H1 (cell line): ENCODE measurements at regions of chr11 and their contacts with region 1.

Region 1: GRCh38 chr11:76598426-76598839 is 72.1 kb downstream of the LRRC32 start:
- DNase-seq: peak in 1 of 2 experiments; percentile 62
- H3K4me3 ChIP-seq: no peak overlapping the region
- H3K27ac ChIP-seq: no peak overlapping the region
- H3K4me1 ChIP-seq: no peaks in the 10 kb centered on the region
- H3K27me3 ChIP-seq: no peaks in the 10 kb centered on the region
- CTCF ChIP-seq: peak; percentile 71 to 82 (median 79)
- EP300 ChIP-seq: no peak
- POLR2A ChIP-seq: no peak
- RAD21 ChIP-seq: peak; percentile 83 to 90

Region 2: DNA sequence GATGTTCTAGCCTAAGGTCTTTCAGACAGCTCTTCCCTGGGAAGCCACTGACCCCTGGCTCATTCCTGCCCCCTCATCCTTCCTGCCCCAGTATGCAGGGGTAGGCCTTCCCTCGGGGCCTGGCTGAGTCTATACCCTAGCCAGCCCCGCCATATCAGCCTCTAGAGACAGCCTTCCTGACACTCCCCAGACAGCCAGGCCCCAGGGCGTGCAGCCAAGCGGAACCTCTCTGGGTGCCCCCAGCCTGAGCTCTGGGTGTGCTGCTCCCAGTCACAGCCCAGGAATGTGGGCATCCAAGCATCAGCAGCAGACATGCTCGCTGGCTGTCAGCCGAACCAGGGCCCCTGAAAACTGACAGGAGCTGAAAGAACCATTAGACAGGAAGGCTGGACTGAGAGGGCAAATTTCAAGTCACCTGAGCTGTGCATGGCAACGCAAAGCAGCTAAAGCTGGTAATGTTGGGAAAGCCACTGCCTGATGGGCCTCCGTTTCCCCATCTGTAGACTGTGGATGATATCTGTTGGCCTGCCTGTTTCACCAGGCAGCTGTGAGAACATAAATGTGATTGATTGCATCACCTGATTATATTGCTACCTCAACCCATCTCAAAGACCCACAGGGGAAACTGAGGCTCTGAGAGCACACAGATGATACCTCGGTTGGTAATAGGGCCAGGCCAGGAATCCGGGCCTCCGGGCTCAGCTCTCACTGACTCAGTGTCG is 21.1 kb before region 1 on chr11:
- CTCF ChIA-PET with region 1: interaction called, 19 read pairs
- POLR2A ChIA-PET with region 1: no interaction called
- DNase-seq: no peak
- H3K4me3 ChIP-seq: no peak overlapping the region
- H3K27ac ChIP-seq: no peak overlapping the region
- H3K4me1 ChIP-seq: peaks cover 0 to 11% (median 2%) of the 10 kb centered on the region in 4 experiments; a peak in 5 of 7 replicates
- H3K27me3 ChIP-seq: no peaks in the 10 kb centered on the region
- CTCF ChIP-seq: no peak
- EP300 ChIP-seq: no peak
- POLR2A ChIP-seq: no peak
- RAD21 ChIP-seq: no peak

Region 3: DNA sequence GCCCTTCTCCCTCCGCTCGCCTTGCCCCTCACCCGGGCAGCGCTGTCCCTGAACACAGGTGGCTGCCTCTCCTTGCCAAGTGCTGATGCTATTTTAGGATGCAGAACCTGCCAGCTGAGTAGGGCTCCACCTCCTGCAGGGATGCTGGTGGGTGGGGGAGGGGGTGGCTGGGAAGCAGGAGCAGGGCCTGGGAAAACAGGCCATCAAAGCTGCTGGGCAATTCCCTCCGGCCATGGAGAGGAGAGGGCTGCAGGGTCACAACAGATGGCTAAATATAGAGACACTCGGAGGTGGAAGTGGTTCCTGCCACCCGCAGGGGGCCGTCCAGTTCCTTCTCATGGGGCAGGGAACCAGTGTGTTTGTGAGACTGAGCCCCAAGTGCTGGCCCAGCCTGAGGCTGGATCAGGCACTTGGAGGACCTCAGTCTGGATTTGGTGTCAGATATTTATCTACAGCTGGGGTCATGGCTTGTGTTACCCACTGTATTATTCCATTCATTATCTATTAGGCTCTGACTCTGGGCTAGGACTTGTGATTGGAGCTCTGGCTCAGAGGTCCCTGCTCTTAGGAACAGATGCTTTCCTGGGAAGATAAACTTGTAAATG is 12.5 kb after region 1 on chr11:
- CTCF ChIA-PET with region 1: interaction called, 36 read pairs
- POLR2A ChIA-PET with region 1: no interaction called
- DNase-seq: peak in 1 of 2 experiments; percentile 43
- H3K4me3 ChIP-seq: peak overlapping the region in 2 of 4 experiments; percentile 6 to 14; a peak in 1 of 8 replicates
- H3K27ac ChIP-seq: no peak overlapping the region
- H3K4me1 ChIP-seq: peaks cover 0 to 18% (median 10%) of the 10 kb centered on the region in 4 experiments; a peak in 6 of 7 replicates
- H3K27me3 ChIP-seq: no peaks in the 10 kb centered on the region
- CTCF ChIP-seq: no peak
- EP300 ChIP-seq: no peak
- POLR2A ChIP-seq: no peak
- RAD21 ChIP-seq: no peak

Region 4: DNA sequence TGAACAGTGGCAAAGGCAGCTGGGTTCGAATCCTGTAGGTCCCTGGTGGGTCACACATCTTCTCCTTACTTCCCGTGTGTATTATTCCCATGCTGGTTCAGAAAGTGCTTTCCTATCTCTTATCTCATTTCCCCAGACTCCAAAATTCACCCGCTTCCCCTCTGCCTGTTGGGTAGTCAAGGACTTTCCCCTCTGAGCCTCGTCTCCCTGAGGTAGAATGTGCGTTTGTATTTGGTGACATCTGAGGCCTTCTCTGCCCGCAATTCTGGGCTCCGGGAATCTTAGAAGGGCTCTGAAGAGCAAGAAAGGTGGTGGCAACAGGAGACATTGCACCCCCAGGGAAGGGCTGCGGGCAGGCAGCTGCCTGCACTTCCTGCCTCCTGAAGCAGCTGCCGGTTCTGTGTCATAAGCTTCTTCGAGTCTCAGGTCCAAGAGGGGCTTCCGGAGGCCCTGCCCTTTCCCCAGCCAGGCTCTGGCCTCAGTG is 66.2 kb after region 1 on chr11:
- CTCF ChIA-PET with region 1: interaction called, 18 read pairs
- POLR2A ChIA-PET with region 1: no interaction called
- DNase-seq: no peak
- H3K4me3 ChIP-seq: no peak overlapping the region
- H3K27ac ChIP-seq: no peak overlapping the region
- H3K4me1 ChIP-seq: peaks cover 0 to 9% (median 1%) of the 10 kb centered on the region in 4 experiments; a peak in 4 of 7 replicates
- H3K27me3 ChIP-seq: peaks cover 0 to 7% (median 4%) of the 10 kb centered on the region in 4 experiments; a peak in 4 of 7 replicates
- CTCF ChIP-seq: no peak
- EP300 ChIP-seq: no peak
- POLR2A ChIP-seq: no peak
- RAD21 ChIP-seq: no peak

Region 5: GRCh38 chr11:76670485-76671236 is 72.2 kb after region 1 on chr11 and contains the start of gene LRRC32:
- CTCF ChIA-PET with region 1: interaction called, 60 read pairs
- POLR2A ChIA-PET with region 1: no interaction called
- DNase-seq: peak in 1 of 2 experiments; percentile 77
- H3K4me3 ChIP-seq: peak within 1 kb of the TSS; percentile 47 to 68 (median 53)
- H3K27ac ChIP-seq: no peak within 1 kb of the TSS
- H3K4me1 ChIP-seq: peaks cover 0 to 6% (median 1%) of the 10 kb centered on the region in 4 experiments; a peak in 5 of 7 replicates
- H3K27me3 ChIP-seq: peaks cover 0 to 26% (median 17%) of the 10 kb centered on the region in 4 experiments; a peak in 5 of 7 replicates
- CTCF ChIP-seq: no peak
- EP300 ChIP-seq: no peak
- POLR2A ChIP-seq: no peak
- RAD21 ChIP-seq: no peak
- total RNA-seq, gene LRRC32: 0.44 and 0.99 TPM in 2 replicates

Region 6: DNA sequence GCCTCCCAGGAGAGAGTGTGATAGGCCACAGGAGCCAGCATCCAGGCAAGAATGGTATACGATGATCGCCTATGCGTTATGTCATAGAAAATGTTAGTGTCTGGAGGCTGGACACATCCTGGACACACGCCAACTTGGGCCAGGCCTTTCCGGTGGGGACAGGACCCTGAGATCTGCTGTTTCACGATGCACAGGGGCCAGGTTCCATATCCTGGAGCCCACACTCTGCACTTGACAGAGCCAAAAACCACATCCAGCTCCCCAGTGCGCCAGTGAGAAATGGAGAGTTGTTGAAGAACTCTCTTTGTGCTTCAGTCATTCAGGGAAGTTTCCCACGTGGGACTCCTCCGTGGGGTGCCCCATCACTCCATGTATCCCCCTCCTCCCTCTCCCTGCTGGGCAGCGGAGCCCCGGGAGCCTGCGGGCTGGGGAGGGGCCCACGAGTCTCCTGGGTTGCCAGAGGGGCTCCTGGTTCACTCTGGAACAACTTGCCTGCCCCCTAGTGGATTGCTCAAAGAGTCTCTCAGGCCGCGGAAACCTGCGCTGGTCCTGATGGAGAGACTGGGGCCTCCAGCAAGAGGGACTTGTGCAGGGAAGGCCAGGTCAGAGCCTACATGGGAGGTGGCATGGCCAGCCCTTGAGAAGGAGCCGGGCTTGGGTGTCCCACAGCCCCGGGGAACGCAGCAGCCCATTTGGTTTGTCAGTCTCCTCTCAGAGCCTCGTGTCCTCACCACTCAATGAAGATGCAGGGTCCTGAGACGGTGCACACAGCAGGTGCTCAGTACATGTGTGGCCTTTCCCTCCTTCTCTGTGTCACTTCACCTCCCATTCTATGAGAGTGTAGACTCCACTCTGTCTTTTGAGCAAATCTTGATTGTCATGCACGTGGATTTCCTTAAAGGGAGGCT is 82.3 kb after region 1 on chr11:
- CTCF ChIA-PET with region 1: interaction called, 60 read pairs
- POLR2A ChIA-PET with region 1: no interaction called
- DNase-seq: peak; percentile 49 to 89
- H3K4me3 ChIP-seq: no peak overlapping the region
- H3K27ac ChIP-seq: no peak overlapping the region
- H3K4me1 ChIP-seq: peaks cover 0 to 2% (median 2%) of the 10 kb centered on the region in 4 experiments; a peak in 6 of 7 replicates
- H3K27me3 ChIP-seq: no peaks in the 10 kb centered on the region; a peak in 2 of 7 replicates
- CTCF ChIP-seq: peak; percentile 73 to 93 (median 84)
- EP300 ChIP-seq: no peak
- POLR2A ChIP-seq: no peak
- RAD21 ChIP-seq: peak; percentile 94 to 98

Region 7: DNA sequence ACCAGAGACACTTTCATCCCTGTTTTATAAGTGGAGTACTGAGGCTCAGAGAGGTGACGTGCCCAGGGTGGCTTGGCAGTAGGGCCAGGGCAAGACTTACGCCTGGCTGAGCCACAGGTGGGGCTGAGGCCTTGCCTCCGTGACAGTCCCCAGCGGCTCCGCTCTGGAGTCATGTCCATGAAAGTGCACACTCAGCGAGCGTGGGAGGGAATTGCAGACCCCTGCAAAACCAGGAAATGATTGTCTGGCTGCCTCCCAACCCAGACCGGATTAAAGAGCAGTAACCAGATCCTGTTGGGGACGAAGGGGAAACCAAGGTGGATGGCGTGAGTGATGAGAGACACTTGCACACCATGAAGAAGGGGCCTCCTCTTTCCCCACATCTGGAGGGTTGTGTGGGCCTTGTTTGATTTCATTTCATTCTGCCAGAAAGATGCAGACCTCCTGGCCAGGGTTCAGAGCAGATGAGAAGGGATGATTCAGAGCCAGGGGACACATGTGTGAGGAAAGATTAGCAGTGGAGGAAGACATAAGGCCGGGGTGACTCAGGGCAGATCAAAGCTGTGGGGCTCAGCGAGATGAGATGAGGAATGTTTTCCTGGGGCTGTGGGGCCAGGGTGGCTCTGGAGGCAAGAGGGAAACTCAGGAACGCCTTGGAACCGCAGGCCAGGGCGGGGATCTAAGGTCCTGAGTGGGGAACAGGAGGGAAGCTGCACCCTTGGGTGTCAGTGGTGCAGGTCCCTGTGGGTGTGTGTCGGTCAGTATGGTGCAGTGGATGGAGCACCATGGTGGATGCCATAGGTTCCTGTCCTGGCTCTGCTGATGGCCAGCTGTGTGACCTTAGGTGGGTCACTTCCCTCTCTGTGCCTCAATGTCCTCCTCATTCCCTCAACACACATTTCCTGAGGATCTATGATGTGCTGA is 102.0 kb after region 1 on chr11:
- CTCF ChIA-PET with region 1: interaction called, 18 read pairs
- POLR2A ChIA-PET with region 1: no interaction called
- DNase-seq: no peak
- H3K4me3 ChIP-seq: no peak overlapping the region
- H3K27ac ChIP-seq: no peak overlapping the region
- H3K4me1 ChIP-seq: peaks cover 9 to 20% (median 16%) of the 10 kb centered on the region in 4 experiments
- H3K27me3 ChIP-seq: no peaks in the 10 kb centered on the region
- CTCF ChIP-seq: no peak
- EP300 ChIP-seq: no peak
- POLR2A ChIP-seq: no peak
- RAD21 ChIP-seq: no peak